Mammary epithelial cell (primary cell): ENCODE measurements at regions of chr19 and their contacts with region 1.

Region 1: DNA sequence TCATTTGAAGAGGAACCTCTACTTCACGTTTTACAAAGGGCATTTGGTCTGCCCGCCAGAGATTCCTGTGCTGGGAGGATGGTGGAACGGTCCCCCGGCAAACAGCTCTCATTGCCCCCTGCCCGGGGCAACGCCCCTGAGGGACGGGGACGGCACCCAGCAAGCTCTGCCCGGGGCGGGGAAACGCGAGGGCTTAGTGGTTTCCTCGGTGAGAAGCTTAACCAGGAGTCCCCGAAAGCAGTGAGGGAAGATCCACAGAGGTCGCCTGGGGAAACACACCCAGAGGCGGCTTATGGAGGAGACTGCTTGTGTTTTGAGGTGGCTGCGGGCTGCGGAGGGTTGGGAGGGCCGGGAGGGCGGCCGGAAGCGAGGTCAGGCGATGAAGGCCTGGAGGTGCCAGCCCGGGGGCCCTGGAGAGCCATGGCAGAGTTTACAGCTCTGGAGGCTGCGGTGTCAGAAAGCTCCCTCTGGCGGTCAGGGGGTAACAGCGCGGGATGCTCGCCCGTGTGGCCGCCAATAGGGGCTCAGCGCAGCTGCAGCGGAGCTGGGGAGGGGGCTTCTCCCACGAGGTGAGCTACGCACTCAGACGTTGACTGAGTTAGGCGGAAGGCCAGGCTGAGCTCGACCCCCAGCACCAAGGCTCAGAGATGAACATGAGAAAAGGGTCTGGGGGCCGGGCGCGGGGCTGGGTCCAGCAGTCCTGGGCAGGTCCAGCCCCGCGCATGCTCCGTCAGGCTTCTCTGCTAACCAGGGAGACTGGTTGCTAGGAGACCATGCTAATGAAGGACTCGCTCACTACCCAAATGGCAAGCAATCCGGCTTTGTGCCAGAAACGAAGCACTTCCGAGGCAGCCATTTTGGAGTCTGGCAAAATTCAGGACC is 652 bp upstream of the TPGS1 start:
- DNase-seq: peak; percentile 83
- H3K4me3 ChIP-seq: peak overlapping the region; percentile 85 to 93 (median 92)
- H3K27ac ChIP-seq: peak overlapping the region; percentile 87
- H3K4me1 ChIP-seq: peaks cover 26% of the 10 kb centered on the region
- H3K27me3 ChIP-seq: no peaks in the 10 kb centered on the region
- CTCF ChIP-seq: peak; percentile 85 to 92

Region 2: GRCh38 chr19:262125-262524 is 244.5 kb before region 1 on chr19:
- CTCF ChIA-PET with region 1: no interaction called
- dilution Hi-C with region 1: no loop called
- in situ Hi-C with region 1: no loop called
- intact Hi-C with region 1: loop called (anchors 1 kb)
- DNase-seq: no peak
- H3K4me3 ChIP-seq: no peak overlapping the region
- H3K27ac ChIP-seq: no peak overlapping the region
- H3K4me1 ChIP-seq: peaks cover 3% of the 10 kb centered on the region
- H3K27me3 ChIP-seq: no peaks in the 10 kb centered on the region
- CTCF ChIP-seq: no peak

Region 3: DNA sequence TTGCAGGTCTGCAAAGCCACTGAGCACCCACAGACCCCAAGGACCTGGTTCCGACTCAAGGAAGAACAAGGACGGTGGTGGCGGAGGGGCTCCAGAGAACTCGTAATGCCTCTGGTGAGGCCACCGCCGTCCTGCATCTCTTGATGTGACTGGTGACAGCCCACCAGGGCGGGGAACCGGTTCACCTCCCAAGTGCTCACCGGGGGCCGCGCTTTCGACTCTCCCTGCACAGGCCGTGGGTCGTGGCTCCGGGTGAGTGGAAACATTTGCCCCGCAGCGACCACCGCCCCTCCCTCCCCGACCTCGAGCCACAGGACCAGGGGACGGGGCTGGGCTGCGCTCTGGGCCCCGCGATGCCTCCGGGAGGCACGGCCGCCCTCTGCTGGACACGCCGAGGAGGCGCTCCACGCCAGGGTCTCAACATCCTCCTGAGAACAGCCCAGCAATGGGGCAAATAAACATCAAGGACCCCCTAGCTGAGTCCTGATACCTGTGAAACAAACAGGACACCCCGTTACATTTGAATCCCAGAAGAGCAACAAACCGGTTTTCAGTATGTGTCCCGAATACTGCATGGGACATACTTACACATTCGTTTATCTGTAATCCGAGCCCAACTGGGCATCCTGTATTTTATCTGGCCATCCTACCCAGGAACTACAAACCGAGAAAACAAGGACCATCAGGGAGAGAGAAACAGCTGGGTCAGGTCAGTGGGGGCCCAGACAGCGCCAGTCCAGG is 211.5 kb before region 1 on chr19:
- CTCF ChIA-PET with region 1: no interaction called
- dilution Hi-C with region 1: no loop called
- in situ Hi-C with region 1: no loop called
- intact Hi-C with region 1: loop called (anchors 10 kb)
- DNase-seq: no peak
- H3K4me3 ChIP-seq: peak overlapping the region in 1 of 3 experiments; percentile 7
- H3K27ac ChIP-seq: no peak overlapping the region
- H3K4me1 ChIP-seq: peaks cover 14% of the 10 kb centered on the region
- H3K27me3 ChIP-seq: peaks cover 5% of the 10 kb centered on the region
- CTCF ChIP-seq: peak; percentile 63 to 83

Region 4: DNA sequence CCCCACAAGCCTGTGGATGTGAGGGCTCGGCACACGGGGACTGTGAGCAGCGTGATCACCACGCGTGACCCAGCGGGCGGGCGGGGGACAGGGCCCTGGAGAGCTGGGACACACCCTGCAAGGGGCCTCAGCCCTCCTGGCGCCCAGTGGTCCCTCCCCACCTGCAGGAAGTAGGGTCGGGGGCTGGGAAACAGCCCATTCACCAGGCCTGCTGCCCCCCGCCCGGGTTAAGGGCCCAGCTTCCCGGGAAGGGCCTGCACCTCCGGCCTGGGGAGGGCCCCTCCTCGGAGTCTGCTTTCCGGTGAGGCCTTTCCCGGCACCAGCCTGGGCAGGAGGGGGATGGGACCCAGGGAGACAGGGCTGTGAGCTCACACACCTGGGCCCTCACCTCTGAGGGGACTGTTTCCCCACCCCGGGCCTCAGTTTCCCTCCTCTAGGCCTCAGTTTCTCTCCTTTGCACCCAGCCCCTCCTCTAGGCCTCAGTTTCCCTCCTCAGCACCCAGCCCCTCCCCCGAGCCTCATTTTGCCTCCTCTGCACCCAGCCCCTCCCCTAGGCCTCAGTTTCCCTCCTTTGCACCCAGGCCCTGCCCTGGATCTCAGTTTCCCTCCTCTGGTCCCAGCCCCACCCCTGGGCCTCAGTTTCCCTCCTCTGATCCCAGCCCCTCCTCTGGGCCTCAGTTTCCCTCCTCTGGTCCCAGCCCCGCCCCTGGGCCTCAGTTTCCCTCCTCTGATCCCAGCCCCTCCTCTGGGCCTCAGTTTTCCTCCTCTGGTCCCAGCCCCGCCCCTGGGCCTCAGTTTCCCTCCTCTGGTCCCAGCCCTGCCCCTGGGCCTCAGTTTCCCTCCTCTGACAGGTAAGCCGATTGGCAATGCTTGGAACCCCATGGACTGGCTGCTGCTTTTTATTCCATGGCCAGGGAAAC is 12.2 kb before region 1 on chr19:
- CTCF ChIA-PET with region 1: interaction called, 23 read pairs
- dilution Hi-C with region 1: no loop called
- in situ Hi-C with region 1: no loop called
- intact Hi-C with region 1: no loop called
- DNase-seq: no peak
- H3K4me3 ChIP-seq: no peak overlapping the region
- H3K27ac ChIP-seq: no peak overlapping the region
- H3K4me1 ChIP-seq: peaks cover 11% of the 10 kb centered on the region
- H3K27me3 ChIP-seq: peaks cover 10% of the 10 kb centered on the region
- CTCF ChIP-seq: no peak

Region 5: GRCh38 chr19:531009-531752 is 24.5 kb after region 1 on chr19:
- CTCF ChIA-PET with region 1: interaction called, 27 read pairs
- dilution Hi-C with region 1: no loop called
- in situ Hi-C with region 1: no loop called
- intact Hi-C with region 1: loop called (anchors 2 kb)
- DNase-seq: peak; percentile 73
- H3K4me3 ChIP-seq: peak overlapping the region; percentile 71 to 94 (median 85)
- H3K27ac ChIP-seq: peak overlapping the region; percentile 60
- H3K4me1 ChIP-seq: peaks cover 29% of the 10 kb centered on the region
- H3K27me3 ChIP-seq: no peaks in the 10 kb centered on the region
- CTCF ChIP-seq: peak in 1 of 2 donors; percentile 10

Region 6: GRCh38 chr19:572140-572742 is 65.6 kb after region 1 on chr19 and contains the start of gene BSG:
- CTCF ChIA-PET with region 1: no interaction called
- dilution Hi-C with region 1: no loop called
- in situ Hi-C with region 1: no loop called
- intact Hi-C with region 1: loop called (anchors 1 kb)
- DNase-seq: peak; percentile 98
- H3K4me3 ChIP-seq: peak within 1 kb of the TSS; percentile 65 to 97 (median 93)
- H3K27ac ChIP-seq: peak within 1 kb of the TSS; percentile 83
- H3K4me1 ChIP-seq: peaks cover 39% of the 10 kb centered on the region
- H3K27me3 ChIP-seq: no peaks in the 10 kb centered on the region
- CTCF ChIP-seq: no peak
- total RNA-seq, gene BSG: 493 to 593 TPM